H1 (cell line): ENCODE measurements at regions of chr2 and their contacts with region 1.

Region 1: DNA sequence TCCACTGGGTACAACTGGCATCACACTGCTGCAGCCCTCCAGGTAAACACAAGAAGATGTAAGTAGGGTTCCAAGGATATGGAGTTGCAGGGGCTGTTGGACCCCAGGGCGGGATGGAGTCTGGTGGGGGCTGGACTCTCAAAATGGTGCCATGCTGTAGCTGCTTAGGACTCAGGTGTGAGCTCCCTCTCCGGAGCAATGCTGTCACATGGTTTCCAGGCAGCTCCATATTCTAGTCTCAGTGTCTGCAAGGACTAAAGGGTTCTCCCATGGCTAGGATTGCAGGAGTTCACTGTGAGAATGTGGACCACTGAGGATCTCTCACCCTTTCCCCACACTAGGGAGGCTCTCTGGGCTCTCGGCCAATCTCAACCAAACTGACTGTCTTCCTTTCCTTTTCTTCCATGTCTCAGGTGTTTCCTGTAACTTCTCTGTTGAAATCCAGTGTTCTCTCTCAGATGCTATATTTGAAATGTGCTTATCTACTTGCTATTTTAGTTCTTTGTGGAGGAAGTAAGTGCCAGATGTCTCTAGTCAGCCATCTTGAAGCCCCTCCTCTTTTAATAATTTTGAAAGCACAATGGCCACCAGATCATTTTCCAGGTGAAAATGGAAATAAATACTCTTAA is 57.6 kb downstream of the CCNT2 start:
- DNase-seq: no peak
- H3K4me3 ChIP-seq: no peak overlapping the region
- H3K27ac ChIP-seq: no peak overlapping the region
- H3K4me1 ChIP-seq: no peaks in the 10 kb centered on the region
- H3K27me3 ChIP-seq: no peaks in the 10 kb centered on the region
- CTCF ChIP-seq: no peak
- EP300 ChIP-seq: no peak
- POLR2A ChIP-seq: no peak
- RAD21 ChIP-seq: no peak

Region 2: GRCh38 chr2:134988994-134989605 is 12.9 kb after region 1 on chr2:
- CTCF ChIA-PET with region 1: interaction called, 14 read pairs
- POLR2A ChIA-PET with region 1: no interaction called
- DNase-seq: no peak
- H3K4me3 ChIP-seq: no peak overlapping the region
- H3K27ac ChIP-seq: no peak overlapping the region
- H3K4me1 ChIP-seq: no peaks in the 10 kb centered on the region
- H3K27me3 ChIP-seq: no peaks in the 10 kb centered on the region
- CTCF ChIP-seq: peak in 1 of 3 experiments; percentile 46; a peak in 2 of 4 replicates
- EP300 ChIP-seq: no peak
- POLR2A ChIP-seq: no peak
- RAD21 ChIP-seq: peak; percentile 59 to 61